ENCODE measurements at regions of chr9 and their contacts with region 1.

Region 1: DNA sequence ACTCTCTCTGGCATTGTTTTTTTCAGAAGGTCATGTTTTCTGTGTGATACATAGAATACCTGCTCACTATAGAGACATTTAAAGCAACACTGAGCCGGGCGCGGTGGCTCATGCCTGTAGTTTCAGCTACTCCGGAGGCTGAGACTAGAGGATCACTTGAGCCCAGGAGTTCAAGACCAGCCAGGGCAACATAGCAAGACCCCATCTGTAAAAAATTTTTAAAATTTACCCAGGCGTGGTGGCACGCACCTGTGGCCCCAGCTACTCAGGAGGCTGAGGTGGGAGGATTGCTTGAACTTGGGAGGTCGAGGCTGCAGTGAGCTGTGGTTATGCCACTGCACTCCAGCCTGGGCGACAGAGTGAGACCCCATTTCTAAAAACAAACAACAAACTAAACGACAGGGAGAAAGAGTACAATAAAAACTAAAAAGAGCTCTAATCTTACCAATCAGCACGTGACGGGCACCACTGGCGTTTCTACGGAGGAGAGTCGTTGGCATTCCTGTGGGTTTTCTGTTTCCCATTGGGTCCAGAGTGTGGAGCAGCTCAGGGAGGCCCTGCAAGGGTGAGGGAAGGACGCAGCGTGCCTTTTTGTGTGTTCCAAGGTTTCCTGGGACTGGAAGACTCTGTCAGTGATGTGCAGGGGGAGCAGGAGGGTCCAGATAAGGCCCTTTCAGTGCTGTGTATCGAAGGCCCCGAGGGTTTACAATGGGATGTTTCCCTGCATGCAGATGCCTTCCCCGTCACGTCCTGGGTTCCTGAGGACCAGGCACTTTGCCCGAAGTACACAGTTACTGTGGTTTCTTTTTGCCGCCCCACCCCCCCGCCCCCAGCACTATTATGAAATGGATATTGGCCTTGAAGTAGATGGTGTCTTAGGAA is 7.2 kb upstream of the RNU6ATAC start:
- DNase-seq: no peak
- H3K4me3 ChIP-seq: no peak overlapping the region
- H3K27ac ChIP-seq: no peak overlapping the region
- H3K4me1 ChIP-seq: peaks cover 0 to 7% of the 10 kb centered on the region in 2 experiments; a peak in 1 of 4 replicates
- H3K27me3 ChIP-seq: peaks cover 6% of the 10 kb centered on the region; the same call in 1 of the 2 replicates
- CTCF ChIP-seq: no peak
- EP300 ChIP-seq: no peak
- RAD21 ChIP-seq: no peak

Region 2: GRCh38 chr9:134099123-134099787 is 72.3 kb before region 1 on chr9:
- CTCF ChIA-PET with region 1: no interaction called
- POLR2A ChIA-PET with region 1: no interaction called
- DNase-seq: no peak
- H3K4me3 ChIP-seq: no peak overlapping the region; a peak in 1 of 4 replicates
- H3K27ac ChIP-seq: no peak overlapping the region
- H3K4me1 ChIP-seq: no peaks in the 10 kb centered on the region; a peak in 1 of 4 replicates
- H3K27me3 ChIP-seq: peaks cover 16% of the 10 kb centered on the region; the same call in 1 of the 2 replicates
- CTCF ChIP-seq: peak; percentile 57
- EP300 ChIP-seq: no peak
- RAD21 ChIP-seq: peak; percentile 56

Region 3: DNA sequence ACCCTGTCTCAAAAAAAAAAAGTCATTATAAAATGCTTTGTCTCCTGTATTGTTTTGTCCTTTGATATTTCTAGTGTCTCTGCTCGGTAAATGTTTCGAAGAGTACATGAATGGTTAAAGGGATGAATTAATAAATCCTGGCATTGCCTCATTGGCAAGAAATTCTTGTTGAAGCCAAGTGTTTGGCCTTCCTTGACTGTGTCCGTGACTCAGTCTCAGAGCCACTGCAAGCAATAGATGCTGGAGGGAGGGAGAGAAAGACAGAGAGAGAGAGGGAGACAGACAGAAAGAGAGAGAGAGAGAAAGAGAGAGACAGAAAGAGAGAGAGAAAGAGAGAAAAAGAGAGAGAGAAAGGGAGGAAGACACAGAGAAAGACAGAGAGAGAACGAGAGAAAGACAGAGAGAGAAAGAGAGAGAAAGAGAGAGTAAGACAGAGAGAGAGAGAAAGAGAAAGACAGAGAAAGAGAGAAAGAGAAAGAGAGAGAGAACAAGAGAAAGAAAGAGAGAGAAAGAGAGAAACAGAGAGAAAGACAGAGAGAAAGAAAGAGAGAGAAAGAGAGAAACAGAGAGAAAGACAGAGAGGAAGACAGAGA is 82.1 kb after region 1 on chr9:
- CTCF ChIA-PET with region 1: no interaction called
- POLR2A ChIA-PET with region 1: no interaction called
- DNase-seq: no peak
- H3K4me3 ChIP-seq: no peak overlapping the region
- H3K27ac ChIP-seq: no peak overlapping the region
- H3K4me1 ChIP-seq: peaks cover 0 to 3% of the 10 kb centered on the region in 2 experiments; a peak in 1 of 4 replicates
- H3K27me3 ChIP-seq: no peaks in the 10 kb centered on the region
- CTCF ChIP-seq: no peak
- EP300 ChIP-seq: no peak
- RAD21 ChIP-seq: no peak

Region 4: GRCh38 chr9:134333234-134333873 is 161.8 kb after region 1 on chr9:
- CTCF ChIA-PET with region 1: interaction called, 11 read pairs
- POLR2A ChIA-PET with region 1: no interaction called
- DNase-seq: peak; percentile 85
- H3K4me3 ChIP-seq: no peak overlapping the region
- H3K27ac ChIP-seq: peak overlapping the region in 1 of 2 experiments; percentile 85; a peak in 2 of 4 replicates
- H3K4me1 ChIP-seq: peaks cover 11 to 92% of the 10 kb centered on the region in 2 experiments; a peak in 2 of 4 replicates
- H3K27me3 ChIP-seq: no peaks in the 10 kb centered on the region
- CTCF ChIP-seq: no peak
- EP300 ChIP-seq: 0 out of 4 replicates have a peak, but pooled peaks of 1 of the 2 experiments have one; percentile 42
- RAD21 ChIP-seq: no peak

Region 5: GRCh38 chr9:134365791-134366688 is 194.5 kb after region 1 on chr9:
- CTCF ChIA-PET with region 1: interaction called, 11 read pairs
- POLR2A ChIA-PET with region 1: no interaction called
- DNase-seq: peak; percentile 93
- H3K4me3 ChIP-seq: peak overlapping the region in 1 of 2 experiments; percentile 21; a peak in 3 of 4 replicates
- H3K27ac ChIP-seq: peak overlapping the region; percentile 81 to 98
- H3K4me1 ChIP-seq: peaks cover 39 to 78% of the 10 kb centered on the region in 2 experiments
- H3K27me3 ChIP-seq: no peaks in the 10 kb centered on the region
- CTCF ChIP-seq: 0 out of 2 replicates have a peak, but pooled peaks have one; percentile 8
- EP300 ChIP-seq: peak; percentile 33 to 71; a peak in 3 of 4 replicates
- RAD21 ChIP-seq: peak; percentile 42

Region 6: DNA sequence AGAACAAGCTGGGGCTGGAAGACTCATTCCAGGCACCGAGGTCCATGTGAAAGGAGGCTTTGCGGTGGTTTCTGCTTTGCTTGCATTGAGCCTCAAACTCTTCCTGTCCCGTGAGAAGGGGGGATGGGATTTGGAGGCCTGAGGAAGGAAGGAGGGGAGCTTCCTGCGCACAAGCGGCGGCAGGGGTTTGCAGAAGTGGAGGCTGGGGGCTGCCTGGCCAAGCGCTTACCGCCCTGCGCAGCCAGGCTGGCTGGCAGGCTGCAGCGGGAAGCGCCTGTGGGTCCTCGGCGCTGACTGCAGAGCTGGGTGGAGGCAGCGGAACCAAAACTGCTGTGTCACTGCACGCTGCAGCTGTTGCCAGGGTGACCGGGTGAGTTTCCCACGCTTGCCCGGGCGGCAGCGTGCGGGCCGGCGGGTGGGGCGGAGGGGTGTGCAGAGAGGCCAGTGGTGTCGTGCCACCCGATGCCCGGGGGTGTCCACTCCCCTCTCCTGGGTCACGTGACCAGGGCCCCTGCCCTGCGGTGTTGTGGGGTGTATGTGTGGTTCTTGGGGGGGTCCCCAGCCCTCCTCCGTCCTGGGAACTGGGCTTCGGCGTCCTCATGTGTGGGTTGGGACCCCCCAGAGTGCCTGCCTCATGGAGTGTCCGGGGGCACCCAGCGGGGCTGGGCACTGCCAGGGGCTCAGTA is 235.7 kb after region 1 on chr9:
- CTCF ChIA-PET with region 1: interaction called, 15 read pairs
- POLR2A ChIA-PET with region 1: no interaction called
- DNase-seq: peak; percentile 97
- H3K4me3 ChIP-seq: peak overlapping the region; percentile 37 to 44
- H3K27ac ChIP-seq: peak overlapping the region; percentile 70 to 95
- H3K4me1 ChIP-seq: peaks cover 27 to 44% of the 10 kb centered on the region in 2 experiments
- H3K27me3 ChIP-seq: no peaks in the 10 kb centered on the region
- CTCF ChIP-seq: no peak
- EP300 ChIP-seq: peak in 1 of 2 experiments; percentile 37; a peak in 1 of 4 replicates
- RAD21 ChIP-seq: no peak